ENCODE measurements at regions of chr10 and their contacts with region 1.

Region 1: DNA sequence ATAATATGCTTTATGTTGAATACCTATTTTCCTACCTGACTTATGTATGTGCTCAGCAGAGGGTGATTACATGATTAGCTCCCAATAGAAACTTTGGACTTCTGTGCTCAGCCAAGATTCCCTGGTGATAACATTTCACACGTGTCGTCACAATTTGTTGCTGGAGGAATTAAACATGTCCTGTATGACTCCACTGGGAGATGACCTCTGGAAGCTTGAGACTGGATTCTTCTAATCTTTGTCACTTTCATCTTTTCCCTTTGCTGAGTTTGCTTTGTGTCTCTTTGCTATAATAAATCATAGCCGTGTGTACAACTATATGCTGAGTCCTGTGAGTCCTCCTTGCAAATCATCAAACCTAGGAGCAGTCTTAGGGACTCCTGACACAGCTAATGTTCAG is 120.9 kb upstream of the LRRTM3 start:
- DNase-seq: no peak
- H3K4me3 ChIP-seq: no peak overlapping the region
- H3K27ac ChIP-seq: no peak overlapping the region
- H3K4me1 ChIP-seq: no peaks in the 10 kb centered on the region
- H3K27me3 ChIP-seq: no peaks in the 10 kb centered on the region
- CTCF ChIP-seq: no peak
- EP300 ChIP-seq: no peak
- POLR2A ChIP-seq: no peak

Region 2: DNA sequence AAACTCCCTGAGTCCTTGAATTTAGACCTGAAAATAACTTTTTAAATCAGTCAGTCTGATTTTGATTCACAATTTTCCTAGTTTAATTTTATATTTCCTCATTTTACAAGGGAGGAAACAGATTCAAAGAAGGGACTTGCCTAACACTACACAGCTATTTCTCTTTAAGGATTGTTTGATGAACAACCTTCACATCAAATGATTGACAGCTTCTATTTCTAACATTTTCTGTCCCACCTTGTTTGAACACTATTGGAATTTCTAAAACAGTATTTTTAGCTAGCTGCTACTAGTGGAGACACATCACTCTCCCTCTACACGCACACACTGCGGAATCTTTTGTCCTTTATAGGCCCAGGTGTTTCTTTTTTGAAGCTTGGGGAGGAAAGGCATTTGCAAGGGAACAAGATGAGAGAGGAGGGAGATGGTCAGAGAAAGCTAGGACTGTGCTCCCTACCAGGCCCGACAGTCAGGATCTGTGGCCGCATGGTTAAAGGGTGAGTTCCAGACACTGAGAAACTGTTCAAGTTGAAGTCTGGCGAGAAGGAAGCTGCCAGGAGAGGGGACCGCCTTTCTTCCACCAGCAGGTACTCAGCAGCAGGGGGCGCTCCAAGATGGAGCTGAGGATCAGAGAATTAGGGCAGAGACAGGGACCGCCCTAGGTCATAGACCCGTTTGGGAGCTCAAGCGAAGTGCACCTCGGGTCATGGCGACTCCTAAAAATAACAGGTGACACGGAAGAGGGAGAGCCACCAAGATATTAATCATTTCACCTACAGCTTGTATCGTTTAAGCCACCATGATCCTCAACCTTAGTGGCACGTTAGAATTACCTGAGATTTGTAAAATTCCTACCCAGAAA is 983.3 kb after region 1 on chr10:
- intact Hi-C with region 1: loop called in 1 of 4 experiments (anchors 5 kb)
- DNase-seq: peak in 1 of 5 donors; percentile 31
- H3K4me3 ChIP-seq: no peak overlapping the region
- H3K27ac ChIP-seq: no peak overlapping the region
- H3K4me1 ChIP-seq: peaks cover 2% of the 10 kb centered on the region
- H3K27me3 ChIP-seq: no peaks in the 10 kb centered on the region
- CTCF ChIP-seq: no peak
- EP300 ChIP-seq: no peak
- POLR2A ChIP-seq: no peak

Measured in ovary (tissue), 10 donors.